Lower leg skin (tissue), 4 donors: ENCODE measurements at regions of chr3 and their contacts with region 1.

Region 1: GRCh38 chr3:192246847-192247520 is 480.4 kb downstream of the FGF12 start:
- DNase-seq: no peak
- H3K4me3 ChIP-seq: no peak overlapping the region
- CTCF ChIP-seq: no peak
- POLR2A ChIP-seq: no peak

Region 2: GRCh38 chr3:193237030-193237429 is 990.0 kb after region 1 on chr3:
- intact Hi-C with region 1: loop called (anchors 5 kb)
- DNase-seq: no peak
- H3K4me3 ChIP-seq: no peak overlapping the region
- CTCF ChIP-seq: no peak
- POLR2A ChIP-seq: no peak